ENCODE measurements at regions of chr2 and their contacts with region 1.

Region 1: DNA sequence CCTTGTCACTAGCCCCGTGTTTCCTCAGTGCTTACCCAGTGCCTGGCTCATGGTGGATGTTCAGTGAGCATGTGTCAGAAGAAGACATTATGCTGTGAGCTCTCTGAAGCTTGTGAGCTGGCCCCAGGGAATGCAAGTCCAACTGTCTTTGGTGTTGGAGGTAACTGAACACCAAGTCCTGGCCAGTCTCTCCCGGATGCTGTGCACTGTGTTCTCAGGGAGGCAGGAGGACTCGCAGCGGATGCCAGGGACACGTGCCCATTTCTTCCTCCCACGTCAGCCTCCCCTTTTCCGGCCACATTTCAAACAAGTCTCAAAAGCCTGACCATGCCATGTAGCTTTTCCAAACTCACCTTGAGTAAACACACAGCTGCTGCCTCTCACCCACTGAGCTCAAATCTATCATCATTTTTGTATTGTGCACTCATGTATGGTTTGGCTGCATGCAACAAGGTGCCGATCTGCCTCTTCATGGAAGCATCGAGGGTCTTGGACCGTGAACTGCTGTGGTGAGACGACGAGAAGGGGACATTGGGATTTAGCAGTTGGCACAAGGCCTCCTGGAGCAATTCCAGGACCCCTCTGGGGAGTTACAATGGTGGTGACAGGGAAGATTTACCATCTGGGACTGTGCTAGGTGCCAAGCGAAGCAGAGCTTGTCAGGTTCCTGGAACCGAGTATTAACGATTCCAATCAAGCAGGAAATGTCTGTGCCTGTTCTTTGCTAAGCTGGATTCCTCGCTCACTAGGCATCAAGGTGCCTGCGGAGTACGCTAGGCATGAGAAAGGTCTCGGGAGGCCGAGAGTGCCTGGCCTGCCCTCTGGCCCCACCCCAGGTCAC is 44.4 kb upstream of the MGAT4A start:
- DNase-seq: peak; percentile 35
- H3K4me3 ChIP-seq: no peak overlapping the region
- H3K27ac ChIP-seq: no peak overlapping the region
- H3K4me1 ChIP-seq: no peaks in the 10 kb centered on the region
- H3K27me3 ChIP-seq: no peaks in the 10 kb centered on the region
- CTCF ChIP-seq: no peak
- POLR2A ChIP-seq: no peak

Region 2: DNA sequence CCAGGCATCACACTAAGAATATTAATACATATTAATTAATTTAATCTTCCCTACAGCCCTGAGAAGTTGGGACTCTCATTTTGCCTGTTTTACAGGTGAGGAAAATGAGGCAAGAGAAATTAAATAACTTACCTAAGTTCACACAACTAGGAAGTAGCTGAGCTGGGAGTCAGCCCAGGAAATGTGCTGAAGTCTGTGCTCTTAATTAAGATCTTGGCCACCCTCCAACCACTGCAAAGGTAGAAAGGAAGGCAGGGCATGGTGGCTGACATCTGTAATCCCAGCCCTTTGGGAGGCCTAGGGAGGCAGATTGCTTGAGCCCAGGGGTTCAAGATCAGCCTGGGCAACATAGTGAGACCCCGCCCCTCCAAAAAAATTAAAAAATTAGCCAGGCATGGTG is 31.5 kb before region 1 on chr2:
- CTCF ChIA-PET with region 1: no interaction called
- POLR2A ChIA-PET with region 1: no interaction called
- dilution Hi-C with region 1: loop called (anchors 5 kb)
- intact Hi-C with region 1: no loop called
- DNase-seq: peak; percentile 18
- H3K4me3 ChIP-seq: no peak overlapping the region
- H3K27ac ChIP-seq: no peak overlapping the region
- H3K4me1 ChIP-seq: no peaks in the 10 kb centered on the region
- H3K27me3 ChIP-seq: no peaks in the 10 kb centered on the region
- CTCF ChIP-seq: no peak
- POLR2A ChIP-seq: no peak